ENCODE measurements at regions of chr1 and their contacts with region 1.

Region 1: DNA sequence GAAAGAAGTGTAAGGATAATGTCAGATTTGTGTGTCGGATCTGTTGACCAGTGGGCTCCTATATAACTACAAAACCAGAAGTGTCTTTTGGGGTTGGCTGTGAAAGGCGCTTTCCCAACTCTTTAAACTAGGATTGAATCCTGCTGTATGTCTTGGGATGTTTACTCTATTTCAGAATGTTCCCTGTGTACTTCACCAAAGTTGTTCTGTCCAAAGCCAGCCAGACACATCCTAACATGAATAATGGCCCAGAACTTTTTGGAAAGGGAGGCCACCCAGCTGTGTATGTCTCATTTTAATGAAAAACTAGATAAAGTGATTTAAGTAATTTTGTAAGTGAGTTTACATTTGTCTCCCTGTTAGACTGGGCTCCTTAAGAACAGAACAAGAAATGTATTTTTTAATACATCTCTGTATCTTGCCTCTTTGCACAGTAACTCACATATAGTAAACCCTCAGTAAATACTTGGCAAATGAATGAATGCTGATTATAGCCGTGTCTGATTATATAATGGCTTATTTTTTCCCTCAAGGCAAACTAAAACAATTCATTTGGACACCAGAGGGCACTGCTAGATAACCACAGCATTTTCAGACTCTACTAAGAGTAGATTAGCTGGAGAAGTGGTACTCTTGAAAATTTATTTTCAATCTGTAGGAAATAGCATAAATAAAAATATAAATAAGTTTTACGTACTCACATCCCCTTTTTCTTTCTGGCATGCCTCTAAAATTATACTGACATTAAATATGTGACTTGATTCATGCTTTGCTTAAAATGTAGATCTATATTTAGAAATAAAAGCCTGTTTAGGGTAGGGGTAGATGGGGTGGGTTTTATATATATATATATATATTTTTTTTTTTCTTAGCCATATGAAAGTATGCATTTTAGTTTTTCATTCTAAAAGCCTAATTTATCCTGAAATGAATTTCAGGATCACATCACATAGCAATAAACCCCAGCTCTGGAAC is 23.8 kb downstream of the TSEN15 start:
- DNase-seq: no peak
- H3K4me3 ChIP-seq: no peak overlapping the region
- H3K4me3 Mint-ChIP-seq: no peak overlapping the region
- H3K27ac ChIP-seq: no peak overlapping the region
- H3K27ac Mint-ChIP-seq: peak overlapping the region in 2 of 8 donors; percentile 15 to 25
- H3K4me1 ChIP-seq: no peaks in the 10 kb centered on the region
- H3K4me1 Mint-ChIP-seq: no peaks in the 10 kb centered on the region
- H3K27me3 ChIP-seq: no peaks in the 10 kb centered on the region
- H3K27me3 Mint-ChIP-seq: no peaks in the 10 kb centered on the region

Region 2: DNA sequence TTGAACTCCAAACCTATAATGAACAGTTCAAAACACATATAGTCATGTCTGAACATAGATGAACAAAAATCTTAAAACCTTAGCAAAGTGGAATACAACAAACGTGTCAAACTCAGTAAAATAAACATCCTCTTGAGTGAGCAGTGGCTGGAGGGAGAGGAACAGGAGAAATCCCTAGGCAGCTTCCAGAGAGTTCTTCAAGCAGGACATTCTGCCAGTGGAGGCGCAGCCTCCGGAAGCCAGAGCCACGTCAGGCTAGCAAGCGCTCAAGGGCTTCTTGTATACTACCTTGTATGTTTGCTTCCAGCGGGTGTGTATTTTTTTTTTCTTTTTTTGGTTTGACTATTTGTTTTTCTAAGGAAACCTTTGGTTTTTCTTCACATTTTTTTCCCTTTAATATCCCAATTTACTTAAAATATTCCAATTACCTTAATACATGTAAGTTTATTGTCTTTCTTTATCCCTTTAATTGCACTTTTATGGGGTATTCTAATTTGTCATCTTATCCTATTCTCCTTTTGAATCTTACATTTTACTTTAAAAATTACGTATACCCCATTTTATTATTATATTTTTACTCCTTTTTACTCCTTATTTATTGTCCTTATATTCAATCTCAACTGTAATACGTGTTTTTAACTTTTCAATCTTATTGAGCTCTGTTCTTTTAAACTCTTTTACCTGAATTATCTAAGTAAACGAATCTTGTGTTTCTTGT is 79.9 kb before region 1 on chr1:
- CTCF ChIA-PET with region 1: no interaction called
- POLR2A ChIA-PET with region 1: no interaction called
- DNase-seq: no peak
- H3K4me3 ChIP-seq: no peak overlapping the region
- H3K4me3 Mint-ChIP-seq: no peak overlapping the region
- H3K27ac ChIP-seq: no peak overlapping the region
- H3K27ac Mint-ChIP-seq: no peak overlapping the region
- H3K4me1 ChIP-seq: no peaks in the 10 kb centered on the region
- H3K4me1 Mint-ChIP-seq: peaks cover 7 to 11% (median 10%) of the 10 kb centered on the region in 3 donors
- H3K27me3 ChIP-seq: no peaks in the 10 kb centered on the region
- H3K27me3 Mint-ChIP-seq: peaks cover 0 to 1% of the 10 kb centered on the region in 2 donors

Region 3: GRCh38 chr1:184118046-184118445 is 42.7 kb after region 1 on chr1:
- CTCF ChIA-PET with region 1: no interaction called
- POLR2A ChIA-PET with region 1: no interaction called
- DNase-seq: no peak
- H3K4me3 ChIP-seq: no peak overlapping the region
- H3K4me3 Mint-ChIP-seq: no peak overlapping the region
- H3K27ac ChIP-seq: no peak overlapping the region
- H3K27ac Mint-ChIP-seq: no peak overlapping the region
- H3K4me1 ChIP-seq: no peaks in the 10 kb centered on the region
- H3K4me1 Mint-ChIP-seq: no peaks in the 10 kb centered on the region
- H3K27me3 ChIP-seq: no peaks in the 10 kb centered on the region
- H3K27me3 Mint-ChIP-seq: no peaks in the 10 kb centered on the region

Region 4: GRCh38 chr1:184222652-184223052 is 147.3 kb after region 1 on chr1:
- CTCF ChIA-PET with region 1: interaction called, 11 read pairs
- POLR2A ChIA-PET with region 1: no interaction called
- DNase-seq: peak; percentile 4 to 59 (median 8)
- H3K4me3 ChIP-seq: no peak overlapping the region
- H3K4me3 Mint-ChIP-seq: peak overlapping the region in 2 of 7 donors; percentile 28 to 68
- H3K27ac ChIP-seq: no peak overlapping the region
- H3K27ac Mint-ChIP-seq: peak overlapping the region in 2 of 8 donors; percentile 20 to 30
- H3K4me1 ChIP-seq: no peaks in the 10 kb centered on the region
- H3K4me1 Mint-ChIP-seq: peaks cover 0 to 3% (median 0%) of the 10 kb centered on the region in 3 donors
- H3K27me3 ChIP-seq: no peaks in the 10 kb centered on the region
- H3K27me3 Mint-ChIP-seq: peaks cover 3 to 6% of the 10 kb centered on the region in 2 donors